BJ (cell line): ENCODE measurements at regions of chr1 and their contacts with region 1.

Region 1: DNA sequence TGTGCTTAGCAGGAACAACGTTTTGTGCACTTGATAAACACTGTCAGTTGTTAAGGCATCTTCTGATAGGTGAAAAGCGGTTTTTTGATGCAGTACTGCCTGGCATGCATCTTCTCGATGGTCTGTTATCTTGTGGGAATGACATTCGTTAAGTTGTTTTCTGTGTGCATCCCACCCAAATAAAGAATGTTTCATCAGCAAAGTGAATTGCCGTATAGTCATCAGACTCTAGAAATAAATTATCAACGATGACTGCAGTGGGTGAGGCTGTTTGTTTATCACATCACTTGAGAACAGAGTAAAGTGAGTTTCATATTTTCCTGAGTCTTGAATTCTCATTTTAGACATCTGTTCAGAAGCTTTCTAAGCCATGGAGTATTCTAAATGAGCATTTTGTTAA is 34.1 kb downstream of the NFIA start:
- DNase-seq: no peak
- H3K4me3 ChIP-seq: no peak overlapping the region
- H3K27me3 ChIP-seq: no peaks in the 10 kb centered on the region
- CTCF ChIP-seq: no peak

Region 2: DNA sequence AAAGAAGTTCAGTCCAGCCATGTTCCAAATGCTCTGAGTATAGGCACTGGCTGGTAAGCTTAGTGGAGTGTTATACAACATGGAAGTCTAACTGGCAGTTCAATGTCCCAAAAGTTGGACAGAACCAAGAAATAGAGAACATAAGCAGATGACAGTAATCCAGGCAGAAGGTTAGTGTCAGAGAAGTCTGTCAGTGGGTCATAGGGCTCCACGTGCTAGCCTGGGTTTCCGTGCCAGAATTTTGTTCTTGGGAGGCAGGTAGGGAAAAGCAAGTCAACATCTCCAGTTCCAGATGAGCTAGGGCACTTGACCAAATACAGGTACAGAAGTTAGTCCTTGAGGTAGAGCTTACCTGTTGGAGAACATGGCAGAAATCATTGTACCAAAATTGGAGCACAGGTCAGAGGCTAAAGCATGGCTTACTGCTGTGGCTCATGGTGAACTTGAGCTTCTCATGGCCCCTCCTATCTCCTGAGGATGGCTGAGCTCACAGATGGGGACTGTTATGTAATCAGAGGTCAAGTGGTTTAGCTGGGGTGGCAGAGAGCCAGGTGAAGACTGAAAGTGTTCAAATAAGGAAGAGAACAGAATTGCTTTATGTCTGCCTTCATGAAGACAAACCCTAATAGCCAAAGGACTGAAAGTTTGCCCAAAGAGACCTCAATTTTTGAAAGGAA is 136.8 kb after region 1 on chr1:
- CTCF ChIA-PET with region 1: no interaction called
- POLR2A ChIA-PET with region 1: no interaction called
- DNase-seq: no peak
- H3K4me3 ChIP-seq: no peak overlapping the region
- H3K27me3 ChIP-seq: no peaks in the 10 kb centered on the region
- CTCF ChIP-seq: no peak

Region 3: DNA sequence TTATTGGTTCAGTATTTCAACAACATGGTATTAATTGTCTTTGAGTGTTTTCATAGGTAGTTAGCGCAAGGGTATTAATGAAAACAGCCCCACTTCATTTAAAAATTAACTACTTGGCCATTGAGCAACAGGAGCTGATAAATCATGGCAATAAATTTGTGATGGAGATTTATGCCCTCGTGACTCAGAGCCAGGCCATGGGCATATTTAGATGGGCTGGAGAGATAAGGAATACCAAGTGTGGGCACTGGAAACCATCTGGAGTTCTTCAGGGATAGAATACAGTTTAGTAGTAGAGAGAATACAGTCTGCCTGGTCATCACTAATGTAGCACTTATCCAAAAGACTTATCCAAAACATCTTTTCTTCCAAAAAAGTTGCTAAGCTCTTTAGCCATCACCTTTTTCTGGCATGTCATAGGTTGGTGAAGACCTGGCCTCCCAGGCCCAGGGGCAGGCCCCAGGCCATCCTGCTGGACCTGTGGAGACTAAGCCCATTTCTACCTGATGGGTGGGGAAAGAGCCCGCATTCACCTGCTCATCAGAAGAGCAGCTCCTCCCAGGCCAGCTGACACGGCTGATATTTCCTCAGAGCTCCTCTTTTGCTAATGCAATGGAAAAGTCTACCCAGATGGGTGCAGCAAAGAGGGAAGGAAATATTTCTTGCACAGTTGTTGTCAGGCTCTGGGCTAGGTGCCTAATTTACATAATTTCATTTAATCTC is 370.5 kb after region 1 on chr1:
- CTCF ChIA-PET with region 1: no interaction called
- POLR2A ChIA-PET with region 1: interaction called, 21 read pairs
- DNase-seq: no peak
- H3K4me3 ChIP-seq: no peak overlapping the region
- H3K27me3 ChIP-seq: no peaks in the 10 kb centered on the region
- CTCF ChIP-seq: no peak